Sciatic nerve (tissue), 2 donors: ENCODE measurements at regions of chr5 and their contacts with region 1.

Region 1: GRCh38 chr5:64628901-64629300 is 61.4 kb upstream of the SHISAL2B start:
- DNase-seq: no peak
- ATAC-seq: no peak

Region 2: GRCh38 chr5:64690417-64691151 is 61.7 kb after region 1 on chr5 and contains the start of gene SHISAL2B:
- intact Hi-C with region 1: loop called (anchors 2 kb)
- DNase-seq: no peak
- ATAC-seq: no peak
- total RNA-seq, gene SHISAL2B: not detected